PC-9 (cell line): ENCODE measurements at regions of chr3 and their contacts with region 1.

Region 1: GRCh38 chr3:129016356-129016719 is 15.2 kb downstream of the EFCC1 start:
- DNase-seq: peak; percentile 58 to 68
- H3K4me3 ChIP-seq: no peak overlapping the region
- H3K27ac ChIP-seq: 0 out of 2 replicates have a peak overlapping the region, but pooled peaks have one; percentile 33
- H3K4me1 ChIP-seq: peaks cover 16% of the 10 kb centered on the region
- H3K27me3 ChIP-seq: no peaks in the 10 kb centered on the region
- CTCF ChIP-seq: no peak

Region 2: DNA sequence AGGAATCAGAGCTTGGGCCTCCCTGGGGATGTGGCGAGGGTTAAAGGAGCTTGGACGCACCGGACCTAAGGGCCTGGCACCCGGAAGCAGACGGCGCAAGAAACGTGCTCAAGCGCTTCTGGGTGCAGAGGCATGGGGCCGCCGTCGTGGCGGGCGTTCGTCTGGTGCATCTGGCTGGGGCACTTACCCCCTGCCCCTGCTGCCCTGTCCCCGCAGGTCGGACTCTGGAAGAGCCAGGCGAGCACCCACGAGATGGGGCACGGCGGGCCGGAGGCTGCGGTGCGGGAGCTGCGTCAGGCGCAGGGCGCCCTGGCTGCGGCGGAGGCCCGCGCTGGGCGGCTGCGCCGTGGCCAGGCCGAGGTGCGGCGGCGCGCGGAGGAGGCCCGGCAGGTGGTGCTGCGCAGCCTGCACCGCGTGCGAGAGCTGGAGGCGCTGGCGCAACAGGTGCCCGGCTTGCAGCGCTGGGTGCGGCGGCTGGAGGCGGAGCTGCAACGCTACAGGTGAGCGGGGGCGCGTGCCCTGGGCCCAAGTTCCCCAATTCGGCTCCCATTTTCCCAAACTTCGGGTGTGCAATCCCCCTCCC is 12.7 kb before region 1 on chr3:
- CTCF ChIA-PET with region 1: interaction called, 11 read pairs
- POLR2A ChIA-PET with region 1: no interaction called
- intact Hi-C with region 1: no loop called
- DNase-seq: peak in 1 of 2 experiments; percentile 79
- H3K4me3 ChIP-seq: no peak overlapping the region
- H3K27ac ChIP-seq: no peak overlapping the region
- H3K4me1 ChIP-seq: no peaks in the 10 kb centered on the region
- H3K27me3 ChIP-seq: peaks cover 5% of the 10 kb centered on the region; the same call in 1 of the 2 replicates
- CTCF ChIP-seq: no peak

Region 3: GRCh38 chr3:129026728-129027543 is 10.6 kb after region 1 on chr3:
- CTCF ChIA-PET with region 1: interaction called, 10 read pairs
- POLR2A ChIA-PET with region 1: no interaction called
- intact Hi-C with region 1: no loop called
- DNase-seq: peak; percentile 84 to 94
- H3K4me3 ChIP-seq: peak overlapping the region; percentile 50; the same call in 1 of the 2 replicates
- H3K27ac ChIP-seq: no peak overlapping the region
- H3K4me1 ChIP-seq: 0 out of 2 replicates have a peak, but pooled peaks cover 4% of the 10 kb centered on the region
- H3K27me3 ChIP-seq: no peaks in the 10 kb centered on the region
- CTCF ChIP-seq: peak; percentile 66

Region 4: DNA sequence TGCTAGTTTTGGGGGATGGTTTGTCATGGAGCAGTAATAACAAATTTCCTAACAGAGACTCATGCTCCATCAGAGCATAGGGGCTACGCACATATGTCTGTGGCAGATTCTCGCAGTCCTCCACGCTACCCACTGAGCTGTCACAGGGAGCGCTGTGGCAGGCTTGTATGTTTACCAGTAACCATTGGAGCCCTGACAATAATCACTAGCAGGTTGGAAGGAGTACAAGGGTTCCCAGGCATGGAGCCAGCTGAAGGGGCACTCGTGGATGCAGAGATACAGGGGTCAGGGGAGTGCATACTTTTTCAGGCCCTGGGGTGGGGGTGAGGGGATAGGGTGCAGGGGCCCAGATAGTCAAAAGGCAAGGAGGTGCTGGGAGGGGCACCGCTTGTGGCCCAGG is 36.3 kb after region 1 on chr3:
- CTCF ChIA-PET with region 1: interaction called, 11 read pairs
- POLR2A ChIA-PET with region 1: no interaction called
- intact Hi-C with region 1: no loop called
- DNase-seq: no peak
- H3K4me3 ChIP-seq: no peak overlapping the region
- H3K27ac ChIP-seq: no peak overlapping the region
- H3K4me1 ChIP-seq: no peaks in the 10 kb centered on the region; the same call in 1 of the 2 replicates
- H3K27me3 ChIP-seq: peaks cover 9% of the 10 kb centered on the region
- CTCF ChIP-seq: no peak

Region 5: GRCh38 chr3:129316131-129317013 is 300.0 kb after region 1 on chr3:
- CTCF ChIA-PET with region 1: no interaction called
- POLR2A ChIA-PET with region 1: interaction called, 12 read pairs
- intact Hi-C with region 1: no loop called
- DNase-seq: peak; percentile 53 to 90
- H3K4me3 ChIP-seq: peak overlapping the region; percentile 90
- H3K27ac ChIP-seq: peak overlapping the region; percentile 61
- H3K4me1 ChIP-seq: peaks cover 8% of the 10 kb centered on the region; the same call in 1 of the 2 replicates
- H3K27me3 ChIP-seq: no peaks in the 10 kb centered on the region
- CTCF ChIP-seq: peak; percentile 65

Region 6: GRCh38 chr3:129449279-129450115 is 433.2 kb after region 1 on chr3:
- CTCF ChIA-PET with region 1: no interaction called
- POLR2A ChIA-PET with region 1: no interaction called
- intact Hi-C with region 1: no loop called
- DNase-seq: no peak
- H3K4me3 ChIP-seq: no peak overlapping the region
- H3K27ac ChIP-seq: no peak overlapping the region
- H3K4me1 ChIP-seq: no peaks in the 10 kb centered on the region
- H3K27me3 ChIP-seq: no peaks in the 10 kb centered on the region
- CTCF ChIP-seq: no peak